ENCODE measurements at regions of chr7 and their contacts with region 1.

Region 1: GRCh38 chr7:47266131-47266706 is 315.7 kb downstream of the TNS3 start:
- DNase-seq: peak; percentile 29 to 55
- ATAC-seq: peak; percentile 82 to 89
- H3K4me3 ChIP-seq: no peak overlapping the region
- H3K27ac ChIP-seq: peak overlapping the region in 3 of 4 donors; percentile 32 to 66 (median 55)
- H3K4me1 ChIP-seq: peaks cover 4 to 12% of the 10 kb centered on the region in 2 donors
- H3K27me3 ChIP-seq: no peaks in the 10 kb centered on the region
- CTCF ChIP-seq: peak; percentile 90 to 96 (median 93)
- POLR2A ChIP-seq: no peak

Region 2: GRCh38 chr7:46960970-46961369 is 305.2 kb before region 1 on chr7:
- in situ Hi-C with region 1: no loop called
- intact Hi-C with region 1: no loop called
- DNase-seq: no peak
- ATAC-seq: no peak
- H3K4me3 ChIP-seq: no peak overlapping the region
- H3K27ac ChIP-seq: no peak overlapping the region
- H3K4me1 ChIP-seq: no peaks in the 10 kb centered on the region
- H3K27me3 ChIP-seq: no peaks in the 10 kb centered on the region
- CTCF ChIP-seq: no peak
- POLR2A ChIP-seq: no peak

Region 3: GRCh38 chr7:47371729-47372368 is 105.6 kb after region 1 on chr7:
- in situ Hi-C with region 1: no loop called
- intact Hi-C with region 1: loop called (anchors 5 kb)
- DNase-seq: peak in 1 of 2 donors; percentile 35
- ATAC-seq: no peak
- H3K4me3 ChIP-seq: no peak overlapping the region
- H3K27ac ChIP-seq: no peak overlapping the region
- H3K4me1 ChIP-seq: peaks cover 31 to 36% of the 10 kb centered on the region in 2 donors
- H3K27me3 ChIP-seq: no peaks in the 10 kb centered on the region
- CTCF ChIP-seq: no peak
- POLR2A ChIP-seq: no peak

Region 4: GRCh38 chr7:47827351-47827756 is 561.1 kb after region 1 on chr7:
- in situ Hi-C with region 1: loop called in 2 of 4 experiments (anchors 5 to 10 kb)
- intact Hi-C with region 1: no loop called
- DNase-seq: no peak
- ATAC-seq: no peak
- H3K4me3 ChIP-seq: no peak overlapping the region
- H3K27ac ChIP-seq: no peak overlapping the region
- H3K4me1 ChIP-seq: no peaks in the 10 kb centered on the region
- H3K27me3 ChIP-seq: no peaks in the 10 kb centered on the region
- CTCF ChIP-seq: no peak
- POLR2A ChIP-seq: no peak

Measured in gastrocnemius medialis (tissue), 4 donors.